ENCODE measurements at regions of chr1 and their contacts with region 1.

Region 1: GRCh38 chr1:169546087-169546995 is 39.9 kb downstream of the F5 start:
- DNase-seq: peak; percentile 57
- ATAC-seq: peak; percentile 81
- H3K4me3 Mint-ChIP-seq: no peak overlapping the region
- H3K27ac Mint-ChIP-seq: peak overlapping the region; percentile 2
- H3K4me1 Mint-ChIP-seq: no peaks in the 10 kb centered on the region
- H3K27me3 Mint-ChIP-seq: no peaks in the 10 kb centered on the region

Region 2: GRCh38 chr1:168603501-168604110 is 942.7 kb before region 1 on chr1:
- CTCF ChIA-PET with region 1: no interaction called
- POLR2A ChIA-PET with region 1: no interaction called
- intact Hi-C with region 1: loop called (anchors 1 kb)
- DNase-seq: peak; percentile 84
- ATAC-seq: peak; percentile 78
- H3K4me3 Mint-ChIP-seq: no peak overlapping the region
- H3K27ac Mint-ChIP-seq: no peak overlapping the region
- H3K4me1 Mint-ChIP-seq: no peaks in the 10 kb centered on the region
- H3K27me3 Mint-ChIP-seq: no peaks in the 10 kb centered on the region

Region 3: GRCh38 chr1:169466259-169467230 is 79.8 kb before region 1 on chr1:
- CTCF ChIA-PET with region 1: interaction called, 5 read pairs
- POLR2A ChIA-PET with region 1: no interaction called
- intact Hi-C with region 1: loop called (anchors 1 kb)
- DNase-seq: peak; percentile 46
- ATAC-seq: no peak
- H3K4me3 Mint-ChIP-seq: no peak overlapping the region
- H3K27ac Mint-ChIP-seq: no peak overlapping the region
- H3K4me1 Mint-ChIP-seq: peaks cover 4% of the 10 kb centered on the region
- H3K27me3 Mint-ChIP-seq: no peaks in the 10 kb centered on the region